PC-9 (cell line): ENCODE measurements at regions of chr4 and their contacts with region 1.

Region 1: DNA sequence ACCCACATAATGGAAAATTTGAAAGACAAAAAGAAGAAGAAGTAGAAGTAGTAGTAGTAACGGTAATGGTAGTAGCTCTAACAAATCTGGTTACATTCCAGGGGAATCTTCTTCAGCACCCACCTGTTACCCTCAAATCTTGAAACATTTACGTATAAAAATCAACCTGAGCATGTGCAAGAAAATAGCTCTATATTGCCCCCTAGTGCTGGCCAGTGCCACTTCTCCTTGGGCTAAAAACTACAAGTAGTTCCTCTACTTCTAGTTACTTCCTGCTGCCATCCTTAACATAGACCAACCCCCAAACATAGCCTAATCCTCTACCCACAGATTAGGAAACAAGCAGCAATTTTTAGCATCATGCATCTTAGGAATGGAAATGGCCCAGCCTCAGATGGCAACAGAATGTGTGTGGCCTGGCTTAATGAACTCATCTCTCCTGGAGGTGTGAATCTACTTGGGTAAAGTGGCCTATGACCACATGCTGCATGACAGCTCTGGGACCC is 3.1 kb downstream of the PDGFC start:
- DNase-seq: peak; percentile 38 to 57
- H3K4me3 ChIP-seq: peak overlapping the region; percentile 14; the same call in 1 of the 2 replicates
- H3K27ac ChIP-seq: no peak overlapping the region
- H3K4me1 ChIP-seq: peaks cover 14% of the 10 kb centered on the region
- H3K27me3 ChIP-seq: no peaks in the 10 kb centered on the region
- CTCF ChIP-seq: peak; percentile 82

Region 2: DNA sequence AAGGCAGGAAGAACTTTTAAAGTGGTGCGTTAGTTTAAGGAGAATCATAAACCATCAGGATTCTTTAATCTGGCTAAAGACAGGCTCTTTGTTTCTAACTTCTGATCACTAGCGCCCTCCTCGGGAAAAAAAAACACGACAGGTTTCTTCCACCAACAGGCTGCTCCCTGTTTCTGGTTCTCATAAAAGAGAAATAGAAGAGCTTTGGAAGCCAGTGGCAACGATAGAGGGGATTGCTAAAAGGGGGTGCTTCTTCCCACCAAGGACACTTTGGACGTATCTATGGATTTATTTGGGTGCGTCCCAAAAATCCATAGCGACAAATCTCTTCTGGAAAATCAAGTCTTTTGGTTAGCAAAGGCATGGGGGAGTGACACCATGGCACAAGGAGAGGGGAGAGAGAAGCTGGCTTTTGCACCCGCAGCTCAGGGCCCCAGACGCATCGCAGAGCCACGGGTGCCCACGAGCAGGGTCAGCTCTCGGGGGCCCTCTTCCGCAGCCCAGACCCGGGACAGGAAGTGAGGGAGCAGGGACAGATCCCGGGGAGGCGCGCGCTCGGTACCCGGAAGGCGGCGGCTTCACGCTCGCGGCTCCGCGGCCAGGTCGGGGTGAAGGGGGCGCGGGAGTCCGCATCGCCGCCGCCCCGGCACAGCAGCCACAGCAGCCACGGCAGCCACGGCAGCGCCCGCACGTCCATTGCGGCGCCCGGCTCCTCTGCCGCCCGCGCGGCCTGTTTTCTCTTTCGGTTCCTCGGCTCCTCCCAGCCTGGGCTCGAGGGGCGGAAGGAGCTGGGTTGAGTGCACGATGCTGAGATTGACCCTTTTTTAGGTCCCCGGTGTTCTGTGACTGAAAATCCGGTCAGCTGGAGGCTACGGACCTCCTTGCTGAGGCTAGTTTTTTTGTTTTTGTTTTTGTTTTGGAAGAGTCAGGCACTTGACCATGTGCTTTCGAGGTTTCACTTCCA is 1015.1 kb before region 1 on chr4 and contains the start of gene CTSO:
- CTCF ChIA-PET with region 1: interaction called, 3 read pairs
- POLR2A ChIA-PET with region 1: no interaction called
- intact Hi-C with region 1: loop called (anchors 10 kb)
- DNase-seq: peak; percentile 44 to 63
- H3K4me3 ChIP-seq: peak within 1 kb of the TSS; percentile 75
- H3K27ac ChIP-seq: peak within 1 kb of the TSS; percentile 55
- H3K4me1 ChIP-seq: no peaks in the 10 kb centered on the region
- H3K27me3 ChIP-seq: no peaks in the 10 kb centered on the region
- CTCF ChIP-seq: peak; percentile 71
- total RNA-seq, gene CTSO: 4.8 and 5.0 TPM in 2 replicates

Region 3: DNA sequence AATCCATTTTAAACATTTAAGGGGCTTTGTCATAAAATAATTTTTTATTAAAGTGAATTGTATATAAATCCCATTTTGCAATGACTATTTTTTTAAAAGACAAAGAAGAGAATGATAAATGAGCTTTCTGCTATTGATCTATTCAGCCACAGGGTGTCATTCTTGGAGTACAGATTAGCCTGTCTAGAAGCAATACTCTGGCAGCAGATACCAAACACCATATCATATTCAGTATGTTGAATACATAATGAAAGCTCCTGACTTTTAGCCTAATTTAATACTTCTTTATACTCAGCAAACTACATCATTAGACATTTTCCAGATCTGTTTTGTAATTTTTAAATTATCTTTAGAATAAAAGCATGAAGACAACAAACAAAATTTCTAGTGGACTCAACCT is 493.2 kb before region 1 on chr4:
- CTCF ChIA-PET with region 1: interaction called, 4 read pairs
- POLR2A ChIA-PET with region 1: no interaction called
- intact Hi-C with region 1: loop called (anchors 1 kb)
- DNase-seq: no peak
- H3K4me3 ChIP-seq: no peak overlapping the region
- H3K27ac ChIP-seq: no peak overlapping the region
- H3K4me1 ChIP-seq: no peaks in the 10 kb centered on the region
- H3K27me3 ChIP-seq: no peaks in the 10 kb centered on the region
- CTCF ChIP-seq: peak; percentile 69

Region 4: GRCh38 chr4:156931267-156931666 is 37.3 kb before region 1 on chr4:
- CTCF ChIA-PET with region 1: no interaction called
- POLR2A ChIA-PET with region 1: no interaction called
- intact Hi-C with region 1: loop called (anchors 1 kb)
- DNase-seq: peak; percentile 62 to 73
- H3K4me3 ChIP-seq: no peak overlapping the region
- H3K27ac ChIP-seq: peak overlapping the region; percentile 78
- H3K4me1 ChIP-seq: peaks cover 16% of the 10 kb centered on the region
- H3K27me3 ChIP-seq: no peaks in the 10 kb centered on the region
- CTCF ChIP-seq: no peak

Region 5: GRCh38 chr4:157045507-157046127 is 77.1 kb after region 1 on chr4:
- CTCF ChIA-PET with region 1: interaction called, 9 read pairs
- POLR2A ChIA-PET with region 1: no interaction called
- intact Hi-C with region 1: loop called (anchors 1 kb)
- DNase-seq: peak; percentile 25 to 52
- H3K4me3 ChIP-seq: no peak overlapping the region
- H3K27ac ChIP-seq: no peak overlapping the region
- H3K4me1 ChIP-seq: no peaks in the 10 kb centered on the region
- H3K27me3 ChIP-seq: no peaks in the 10 kb centered on the region
- CTCF ChIP-seq: peak; percentile 70

Region 6: DNA sequence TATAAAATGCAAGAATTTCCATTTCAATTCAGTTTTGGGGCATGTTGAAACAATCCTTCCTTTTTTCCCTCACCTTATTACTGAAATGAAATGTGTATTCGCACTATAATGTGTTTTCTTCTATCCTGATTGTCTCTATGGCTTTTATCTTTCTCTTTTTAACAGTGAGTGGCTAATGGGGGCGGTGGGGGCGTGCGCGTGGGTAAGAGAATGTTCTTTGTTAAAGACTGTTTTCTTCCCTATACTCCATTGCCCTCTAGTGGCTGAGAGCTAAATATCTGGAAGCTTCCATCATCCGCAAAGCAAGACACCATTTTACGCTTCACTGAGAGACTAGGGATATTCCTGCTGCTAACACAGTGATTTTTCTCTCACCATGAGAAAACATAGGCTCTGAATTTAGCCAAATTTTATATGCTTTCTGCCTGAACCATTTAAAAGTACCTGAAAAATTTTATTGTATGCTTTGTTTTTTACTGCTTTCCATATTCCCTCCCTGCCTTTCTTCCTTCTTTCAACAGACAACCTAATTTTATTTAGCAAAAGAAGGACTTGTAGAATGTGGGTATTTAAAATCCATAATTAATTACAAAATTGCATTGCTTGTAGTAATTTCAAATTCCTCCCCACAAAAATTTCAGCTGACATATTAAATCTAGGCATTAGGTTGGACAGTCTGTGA is 1010.3 kb after region 1 on chr4:
- CTCF ChIA-PET with region 1: no interaction called
- POLR2A ChIA-PET with region 1: no interaction called
- intact Hi-C with region 1: loop called (anchors 2 kb)
- DNase-seq: peak in 1 of 2 experiments; percentile 22
- H3K4me3 ChIP-seq: no peak overlapping the region
- H3K27ac ChIP-seq: no peak overlapping the region
- H3K4me1 ChIP-seq: no peaks in the 10 kb centered on the region
- H3K27me3 ChIP-seq: no peaks in the 10 kb centered on the region
- CTCF ChIP-seq: peak; percentile 90